CD8-positive, alpha-beta memory T cell (primary cell): ENCODE measurements at regions of chr1 and their contacts with region 1.

Region 1: GRCh38 chr1:204162231-204163074 is 3.7 kb downstream of the REN start:
- DNase-seq: peak; percentile 63 to 80 (median 72)
- H3K4me3 ChIP-seq: no peak overlapping the region
- H3K4me3 Mint-ChIP-seq: no peak overlapping the region
- H3K27ac ChIP-seq: no peak overlapping the region
- H3K27ac Mint-ChIP-seq: no peak overlapping the region
- H3K4me1 ChIP-seq: no peaks in the 10 kb centered on the region
- H3K4me1 Mint-ChIP-seq: no peaks in the 10 kb centered on the region
- H3K27me3 ChIP-seq: no peaks in the 10 kb centered on the region
- H3K27me3 Mint-ChIP-seq: peaks cover 11 to 24% of the 10 kb centered on the region in 2 donors

Region 2: DNA sequence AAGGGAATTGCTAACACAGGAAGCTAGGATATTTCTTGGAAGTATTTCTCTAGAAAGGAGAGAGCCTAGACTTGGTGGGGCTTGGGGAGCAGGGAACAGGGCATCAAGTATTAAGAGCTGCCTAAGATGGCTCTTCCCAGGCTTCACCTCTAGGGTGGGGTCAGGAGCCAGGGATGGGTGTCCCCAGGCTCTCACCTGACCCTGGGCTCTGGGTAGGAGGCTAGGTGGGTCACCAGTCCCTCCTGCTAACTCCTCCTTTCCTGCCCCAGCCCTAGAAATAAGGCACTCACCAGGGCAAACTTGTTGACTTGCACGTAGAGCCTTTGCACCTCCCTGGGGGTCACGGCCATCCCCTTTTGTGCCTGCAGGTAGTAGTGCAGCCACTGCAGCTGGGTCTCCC is 25.6 kb before region 1 on chr1:
- CTCF ChIA-PET with region 1: interaction called, 12 read pairs
- POLR2A ChIA-PET with region 1: no interaction called
- DNase-seq: no peak
- H3K4me3 ChIP-seq: no peak overlapping the region
- H3K4me3 Mint-ChIP-seq: no peak overlapping the region
- H3K27ac ChIP-seq: no peak overlapping the region
- H3K27ac Mint-ChIP-seq: peak overlapping the region in 1 of 8 donors; percentile 57
- H3K4me1 ChIP-seq: no peaks in the 10 kb centered on the region
- H3K4me1 Mint-ChIP-seq: no peaks in the 10 kb centered on the region
- H3K27me3 ChIP-seq: no peaks in the 10 kb centered on the region
- H3K27me3 Mint-ChIP-seq: peaks cover 0 to 3% of the 10 kb centered on the region in 2 donors

Region 3: GRCh38 chr1:204151552-204152309 is 10.7 kb before region 1 on chr1 and contains the start of gene ETNK2:
- CTCF ChIA-PET with region 1: interaction called, 11 read pairs
- POLR2A ChIA-PET with region 1: no interaction called
- DNase-seq: peak; percentile 54 to 75 (median 67)
- H3K4me3 ChIP-seq: peak within 1 kb of the TSS; percentile 55
- H3K4me3 Mint-ChIP-seq: peak within 1 kb of the TSS; percentile 74 to 90 (median 78)
- H3K27ac ChIP-seq: peak within 1 kb of the TSS; percentile 24
- H3K27ac Mint-ChIP-seq: peak within 1 kb of the TSS in 6 of 8 donors; percentile 8 to 89 (median 68)
- H3K4me1 ChIP-seq: peaks cover 9% of the 10 kb centered on the region
- H3K4me1 Mint-ChIP-seq: peaks cover 5 to 14% (median 8%) of the 10 kb centered on the region in 3 donors
- H3K27me3 ChIP-seq: peaks cover 4% of the 10 kb centered on the region
- H3K27me3 Mint-ChIP-seq: peaks cover 2 to 20% of the 10 kb centered on the region in 2 donors
- total RNA-seq, gene ETNK2: 0.91 to 1.1 TPM

Region 4: GRCh38 chr1:204207136-204207616 is 44.7 kb after region 1 on chr1:
- CTCF ChIA-PET with region 1: interaction called, 11 read pairs
- POLR2A ChIA-PET with region 1: no interaction called
- DNase-seq: peak; percentile 50 to 70 (median 61)
- H3K4me3 ChIP-seq: no peak overlapping the region
- H3K4me3 Mint-ChIP-seq: no peak overlapping the region
- H3K27ac ChIP-seq: no peak overlapping the region
- H3K27ac Mint-ChIP-seq: no peak overlapping the region
- H3K4me1 ChIP-seq: peaks cover 5% of the 10 kb centered on the region
- H3K4me1 Mint-ChIP-seq: peaks cover 0 to 4% (median 0%) of the 10 kb centered on the region in 3 donors
- H3K27me3 ChIP-seq: peaks cover 3% of the 10 kb centered on the region
- H3K27me3 Mint-ChIP-seq: peaks cover 32 to 69% of the 10 kb centered on the region in 2 donors